Activated CD4-positive, alpha-beta T cell treated with anti-CD3 and anti-CD28 coated beads for 36 hours (primary cell): ENCODE measurements at regions of chr11 and their contacts with region 1.

Region 1: DNA sequence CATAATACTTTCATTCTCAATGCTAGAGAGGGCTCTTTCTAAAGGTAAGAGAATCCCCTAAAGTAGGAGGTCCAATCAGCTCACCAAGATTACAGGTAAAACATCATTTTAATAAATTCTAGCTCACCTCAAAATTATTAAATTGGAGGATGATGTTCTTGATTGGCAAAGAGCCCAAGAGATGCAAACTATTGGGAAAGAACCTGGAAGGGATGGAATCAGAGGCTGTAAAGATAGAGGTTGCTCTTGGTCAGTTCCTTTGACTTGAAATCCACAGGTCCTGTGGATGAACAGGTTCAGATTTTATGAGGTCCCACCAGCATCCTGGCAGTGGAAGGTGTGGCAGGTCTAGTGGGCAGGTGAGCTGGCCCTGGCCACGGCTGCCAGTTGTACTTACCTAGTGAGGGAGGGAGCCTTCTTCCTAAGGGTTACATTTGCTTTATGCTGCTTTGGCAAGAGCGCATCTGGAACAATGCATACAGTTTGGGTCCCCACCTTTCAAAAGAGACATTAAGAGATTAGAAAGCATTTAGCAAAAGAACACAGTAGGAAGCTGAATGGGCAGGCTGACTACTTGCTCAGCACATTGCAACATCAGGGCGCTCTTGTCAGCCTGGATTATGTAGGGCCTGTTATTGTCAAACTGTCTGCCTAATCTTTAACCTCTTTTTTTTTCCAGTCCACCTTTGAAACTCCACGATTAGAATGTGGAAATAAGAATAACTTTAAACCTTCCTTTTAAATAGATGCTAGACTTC is 97.1 kb downstream of the RDX start:
- DNase-seq: no peak
- ATAC-seq: no peak
- H3K4me3 Mint-ChIP-seq: no peak overlapping the region
- H3K27ac Mint-ChIP-seq: no peak overlapping the region
- H3K4me1 Mint-ChIP-seq: no peaks in the 10 kb centered on the region
- H3K27me3 Mint-ChIP-seq: no peaks in the 10 kb centered on the region

Region 2: DNA sequence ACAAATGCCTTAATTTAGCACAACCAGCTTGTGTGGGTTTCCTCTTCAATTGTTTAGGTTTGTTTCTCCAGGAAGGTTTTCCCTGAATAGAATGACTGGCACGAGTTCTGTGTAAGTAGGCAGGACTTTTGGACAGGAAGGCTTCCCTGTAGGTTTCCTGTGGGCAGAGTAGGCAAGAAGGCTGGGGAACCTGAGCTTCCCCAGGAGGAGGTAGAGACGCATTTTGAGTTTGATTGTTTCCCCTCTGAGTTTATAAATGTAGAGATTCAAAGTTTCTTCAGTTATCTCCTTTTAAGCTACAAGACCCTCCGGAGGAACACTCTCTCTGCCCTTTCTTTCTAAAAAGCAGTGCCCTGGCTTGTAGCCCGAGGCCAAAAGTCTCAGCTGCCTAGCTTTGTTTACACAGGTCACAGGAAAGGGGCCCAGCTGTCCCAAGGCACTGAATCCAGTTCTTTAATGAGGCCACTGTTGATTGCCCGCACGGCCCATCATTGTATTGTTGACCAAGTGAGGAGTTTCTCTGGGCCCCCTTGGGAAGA is 163.7 kb after region 1 on chr11:
- CTCF ChIA-PET with region 1: interaction called, 21 read pairs
- POLR2A ChIA-PET with region 1: no interaction called
- intact Hi-C with region 1: loop called (anchors 1 to 2 kb)
- DNase-seq: no peak
- ATAC-seq: no peak
- H3K4me3 Mint-ChIP-seq: no peak overlapping the region
- H3K27ac Mint-ChIP-seq: peak overlapping the region; percentile 9
- H3K4me1 Mint-ChIP-seq: peaks cover 11% of the 10 kb centered on the region
- H3K27me3 Mint-ChIP-seq: peaks cover 1% of the 10 kb centered on the region

Region 3: DNA sequence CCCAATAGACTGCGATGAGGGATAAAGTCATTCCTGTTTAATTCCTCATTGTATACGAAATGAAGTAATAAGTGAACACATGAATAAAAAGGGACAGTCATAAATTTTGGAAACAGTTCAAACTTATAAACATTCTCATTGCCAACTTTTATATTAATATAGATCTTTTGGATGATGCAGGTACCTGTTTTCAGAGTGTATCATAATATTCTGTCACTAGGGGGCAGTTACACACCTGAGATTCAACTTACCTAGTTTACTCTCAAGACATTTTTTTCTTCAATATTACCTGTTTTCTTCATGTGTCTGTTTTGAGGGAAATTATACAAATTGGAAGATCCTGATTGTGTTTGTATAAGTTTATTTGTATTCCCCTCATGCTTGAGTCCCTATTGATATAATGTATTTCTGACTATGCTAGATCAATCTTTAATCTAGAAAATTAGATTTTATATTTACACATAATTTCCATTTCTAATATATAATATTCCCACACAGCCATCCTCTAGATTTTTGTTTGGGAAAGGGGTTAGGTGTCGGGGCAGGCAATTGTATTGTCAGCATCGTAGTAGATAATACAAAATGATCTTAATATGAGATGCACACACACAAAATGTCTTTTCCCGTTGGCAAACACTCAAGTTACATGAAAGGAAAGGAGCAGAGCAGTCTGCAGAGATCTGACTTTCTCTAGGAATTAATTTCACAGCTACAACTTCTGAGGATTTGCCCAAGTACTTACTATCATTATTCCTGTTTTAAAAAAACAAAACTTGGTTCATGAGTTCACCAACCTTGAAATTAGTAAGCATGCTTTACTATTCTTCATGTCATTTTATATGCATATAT is 248.8 kb after region 1 on chr11:
- CTCF ChIA-PET with region 1: interaction called, 12 read pairs
- POLR2A ChIA-PET with region 1: no interaction called
- intact Hi-C with region 1: no loop called
- DNase-seq: no peak
- ATAC-seq: no peak
- H3K4me3 Mint-ChIP-seq: no peak overlapping the region
- H3K27ac Mint-ChIP-seq: no peak overlapping the region
- H3K4me1 Mint-ChIP-seq: peaks cover 18% of the 10 kb centered on the region
- H3K27me3 Mint-ChIP-seq: no peaks in the 10 kb centered on the region

Region 4: GRCh38 chr11:110711776-110712658 is 512.7 kb after region 1 on chr11 and contains the start of gene ARHGAP20:
- CTCF ChIA-PET with region 1: no interaction called
- POLR2A ChIA-PET with region 1: no interaction called
- intact Hi-C with region 1: loop called in 1 of 2 experiments (anchors 10 kb)
- DNase-seq: peak; percentile 77
- ATAC-seq: peak; percentile 91
- H3K4me3 Mint-ChIP-seq: peak within 1 kb of the TSS; percentile 62
- H3K27ac Mint-ChIP-seq: no peak within 1 kb of the TSS
- H3K4me1 Mint-ChIP-seq: peaks cover 11% of the 10 kb centered on the region
- H3K27me3 Mint-ChIP-seq: peaks cover 57% of the 10 kb centered on the region
- total RNA-seq, gene ARHGAP20: 0.43 to 0.46 TPM